Caco-2 (cell line): ENCODE measurements at regions of chr20 and their contacts with region 1.

Region 1: DNA sequence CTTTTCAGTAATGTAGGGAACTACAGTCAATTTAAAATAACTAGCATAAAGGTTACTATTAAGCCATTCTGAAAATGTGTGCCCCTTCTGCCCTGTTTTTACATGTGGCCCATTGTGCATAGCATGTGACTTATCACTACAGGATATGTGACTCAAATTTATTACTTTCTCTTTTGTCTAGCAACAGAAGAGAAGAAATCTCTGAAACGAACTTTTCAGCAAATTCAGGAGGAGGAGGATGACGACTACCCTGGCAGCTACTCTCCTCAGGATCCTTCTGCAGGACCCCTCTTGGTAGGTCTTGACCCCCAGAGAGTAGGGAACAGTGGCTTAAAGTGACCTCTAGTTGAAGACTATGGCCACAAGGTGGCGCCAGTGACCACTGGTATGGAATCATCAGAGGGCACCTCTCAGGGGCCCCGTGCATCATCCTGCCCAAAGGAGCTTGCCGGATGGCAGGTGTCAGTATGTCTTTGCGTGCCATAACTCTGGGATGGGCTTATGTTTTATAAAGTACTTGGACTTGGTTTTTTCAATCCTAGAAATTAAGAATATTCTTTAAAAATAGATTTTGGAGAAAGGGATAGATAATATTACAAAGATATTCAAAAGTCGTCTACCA is 23.9 kb downstream of the RPRD1B start:
- DNase-seq: peak; percentile 90 to 94
- H3K4me3 ChIP-seq: no peak overlapping the region
- H3K4me3 Mint-ChIP-seq: no peak overlapping the region
- H3K27ac Mint-ChIP-seq: no peak overlapping the region
- H3K4me1 ChIP-seq: peaks cover 21% of the 10 kb centered on the region
- H3K4me1 Mint-ChIP-seq: peaks cover 13% of the 10 kb centered on the region
- H3K27me3 ChIP-seq: no peaks in the 10 kb centered on the region
- H3K27me3 Mint-ChIP-seq: no peaks in the 10 kb centered on the region
- CTCF ChIP-seq: peak; percentile 98 to 100

Region 2: GRCh38 chr20:36886859-36887751 is 1170.4 kb before region 1 on chr20:
- CTCF ChIA-PET with region 1: no interaction called
- POLR2A ChIA-PET with region 1: interaction called, 13 read pairs
- intact Hi-C with region 1: no loop called
- DNase-seq: peak; percentile 94 to 97
- H3K4me3 ChIP-seq: no peak overlapping the region
- H3K4me3 Mint-ChIP-seq: peak overlapping the region; percentile 27
- H3K27ac Mint-ChIP-seq: no peak overlapping the region
- H3K4me1 ChIP-seq: peaks cover 9% of the 10 kb centered on the region; the same call in 1 of the 2 replicates
- H3K4me1 Mint-ChIP-seq: peaks cover 6% of the 10 kb centered on the region
- H3K27me3 ChIP-seq: no peaks in the 10 kb centered on the region
- H3K27me3 Mint-ChIP-seq: no peaks in the 10 kb centered on the region
- CTCF ChIP-seq: peak; percentile 100

Region 3: DNA sequence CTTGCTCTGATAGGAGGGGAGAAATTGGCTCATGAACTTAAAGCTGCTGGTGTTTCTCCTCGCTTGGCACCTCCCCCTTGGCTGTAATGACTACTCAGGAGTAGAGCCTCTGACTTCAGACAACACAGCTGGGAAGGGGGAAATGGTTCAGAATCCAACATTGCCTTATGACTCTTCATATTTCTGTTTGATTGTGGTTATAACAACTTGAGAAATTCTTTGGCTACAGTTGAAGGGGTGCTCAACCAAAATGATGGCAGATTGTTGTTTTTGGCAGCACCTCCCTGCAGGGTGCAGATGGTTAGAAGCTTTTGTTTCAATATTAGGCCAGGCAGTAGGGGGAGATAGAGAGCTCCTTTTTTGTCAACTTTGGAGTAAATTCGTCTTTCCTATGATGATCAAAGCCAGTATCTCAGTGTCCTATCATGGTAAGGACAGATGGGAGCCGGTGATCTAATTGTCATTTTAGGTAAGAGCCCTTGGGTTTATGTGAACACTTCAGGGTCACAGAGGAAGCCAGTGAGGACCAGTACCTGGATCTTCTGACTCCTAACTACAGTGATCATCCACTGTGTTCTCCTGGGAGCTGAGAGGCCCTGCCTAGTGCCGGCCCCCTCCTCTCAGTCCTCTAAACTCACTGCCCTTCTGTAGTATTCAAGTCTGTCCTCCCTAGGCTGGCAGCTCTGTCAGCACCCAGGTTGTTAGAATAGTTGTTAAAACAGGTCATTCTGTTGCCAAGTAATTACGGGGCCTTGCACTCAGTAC is 16.0 kb after region 1 on chr20:
- CTCF ChIA-PET with region 1: interaction called, 27 read pairs
- POLR2A ChIA-PET with region 1: no interaction called
- intact Hi-C with region 1: loop called (anchors 2 kb)
- DNase-seq: peak in 1 of 2 experiments; percentile 85
- H3K4me3 ChIP-seq: no peak overlapping the region
- H3K4me3 Mint-ChIP-seq: no peak overlapping the region
- H3K27ac Mint-ChIP-seq: no peak overlapping the region
- H3K4me1 ChIP-seq: peaks cover 4% of the 10 kb centered on the region; the same call in 1 of the 2 replicates
- H3K4me1 Mint-ChIP-seq: peaks cover 13% of the 10 kb centered on the region
- H3K27me3 ChIP-seq: no peaks in the 10 kb centered on the region
- H3K27me3 Mint-ChIP-seq: no peaks in the 10 kb centered on the region
- CTCF ChIP-seq: peak; percentile 95 to 98

Region 4: DNA sequence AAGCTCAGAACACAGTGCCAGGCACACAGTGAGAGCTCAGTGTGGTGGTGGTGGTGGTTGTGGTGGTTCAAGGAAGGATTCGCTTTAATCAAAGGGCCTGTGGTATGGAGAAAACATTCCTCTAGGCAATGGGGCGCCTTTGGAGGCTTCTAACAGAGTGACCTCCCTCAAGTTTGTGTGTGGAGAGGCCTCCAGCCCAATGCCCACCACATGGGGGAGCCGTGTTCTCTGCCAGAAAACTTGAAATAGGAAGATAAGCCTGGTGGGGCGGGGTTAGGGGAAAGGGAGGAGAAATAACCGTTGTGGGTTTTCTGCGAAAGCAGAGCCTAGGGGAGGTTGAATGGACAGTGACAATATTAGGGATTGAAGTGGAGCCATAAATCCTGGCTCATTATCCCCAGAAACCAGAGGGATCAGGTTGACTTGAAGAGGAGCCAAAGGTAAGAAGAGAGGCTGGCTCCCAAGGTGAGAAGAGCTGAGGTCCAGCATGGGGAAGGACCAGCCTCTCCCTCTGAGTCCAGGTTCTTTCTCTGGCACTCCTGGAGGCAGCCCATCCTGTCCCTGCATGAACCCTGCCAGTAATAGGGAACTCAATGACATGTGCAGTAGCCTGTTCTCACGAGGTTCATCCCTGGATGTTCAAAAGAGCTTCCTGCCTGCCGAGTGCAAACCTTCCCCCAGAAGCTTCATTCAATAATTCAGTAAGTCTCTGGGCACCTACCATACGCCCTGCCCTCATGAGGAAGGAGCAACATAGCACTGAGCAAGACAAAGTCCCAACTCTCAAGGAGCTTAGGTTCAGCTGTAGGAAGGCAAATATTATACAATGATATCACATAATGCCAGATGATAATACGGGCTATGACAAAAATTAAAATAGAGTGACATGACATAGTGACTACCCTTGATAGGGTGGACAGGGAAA is 56.2 kb after region 1 on chr20:
- CTCF ChIA-PET with region 1: interaction called, 18 read pairs
- POLR2A ChIA-PET with region 1: no interaction called
- intact Hi-C with region 1: loop called (anchors 1 kb)
- DNase-seq: peak; percentile 93
- H3K4me3 ChIP-seq: no peak overlapping the region
- H3K4me3 Mint-ChIP-seq: peak overlapping the region; percentile 8
- H3K27ac Mint-ChIP-seq: peak overlapping the region; percentile 34
- H3K4me1 ChIP-seq: peaks cover 76% of the 10 kb centered on the region
- H3K4me1 Mint-ChIP-seq: peaks cover 77% of the 10 kb centered on the region
- H3K27me3 ChIP-seq: no peaks in the 10 kb centered on the region
- H3K27me3 Mint-ChIP-seq: no peaks in the 10 kb centered on the region
- CTCF ChIP-seq: peak; percentile 80 to 93

Region 5: DNA sequence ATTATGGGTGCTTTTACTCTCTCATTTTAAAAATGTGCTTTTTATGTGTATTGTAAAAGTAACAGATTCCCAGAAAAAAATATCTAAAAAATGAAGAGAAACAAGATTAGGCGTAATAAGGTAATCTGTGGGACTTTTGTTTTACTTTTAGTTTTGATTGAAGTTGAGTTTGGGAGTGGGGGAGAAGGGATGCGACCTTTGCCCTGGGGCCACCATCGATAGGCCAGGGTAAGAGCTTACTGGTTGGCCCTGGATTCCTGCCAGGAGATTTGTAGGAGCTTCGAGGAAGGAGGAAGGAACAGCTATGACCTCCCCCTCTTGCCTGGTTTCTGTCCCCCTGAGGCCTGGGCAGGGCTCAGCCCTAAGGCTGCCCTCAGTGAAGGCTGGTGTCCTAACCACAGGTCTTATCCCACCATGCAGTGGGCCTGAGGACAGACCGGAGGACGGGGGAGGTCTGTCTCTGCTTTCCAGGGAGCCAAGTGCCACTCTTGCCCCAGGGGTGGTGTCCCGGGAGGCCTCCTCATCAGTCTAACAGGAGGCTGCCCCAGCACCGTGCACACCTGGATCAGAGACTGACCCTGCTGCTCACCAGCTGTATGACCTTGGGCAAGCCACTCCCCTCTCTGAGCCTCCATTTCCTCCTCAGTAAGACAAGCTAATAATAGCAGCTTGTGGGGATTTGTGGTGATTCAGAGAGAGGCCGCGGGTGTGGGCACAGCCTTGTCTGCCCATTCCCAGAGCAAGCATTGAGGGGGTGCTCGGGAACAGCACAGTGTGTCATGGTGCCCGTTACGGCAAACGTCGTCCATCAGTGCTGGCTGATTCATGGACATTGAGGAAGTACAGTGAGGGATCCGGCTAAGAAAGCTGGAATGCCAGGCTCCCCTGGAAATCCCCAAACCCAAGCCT is 86.4 kb after region 1 on chr20:
- CTCF ChIA-PET with region 1: interaction called, 23 read pairs
- POLR2A ChIA-PET with region 1: no interaction called
- intact Hi-C with region 1: no loop called
- DNase-seq: peak; percentile 89 to 97
- H3K4me3 ChIP-seq: no peak overlapping the region
- H3K4me3 Mint-ChIP-seq: peak overlapping the region; percentile 56
- H3K27ac Mint-ChIP-seq: peak overlapping the region; percentile 96
- H3K4me1 ChIP-seq: peaks cover 66% of the 10 kb centered on the region
- H3K4me1 Mint-ChIP-seq: peaks cover 48% of the 10 kb centered on the region
- H3K27me3 ChIP-seq: no peaks in the 10 kb centered on the region
- H3K27me3 Mint-ChIP-seq: no peaks in the 10 kb centered on the region
- CTCF ChIP-seq: no peak

Region 6: GRCh38 chr20:38210741-38211140 is 153.3 kb after region 1 on chr20:
- CTCF ChIA-PET with region 1: interaction called, 11 read pairs
- POLR2A ChIA-PET with region 1: no interaction called
- intact Hi-C with region 1: no loop called
- DNase-seq: peak in 1 of 2 experiments; percentile 47
- H3K4me3 ChIP-seq: no peak overlapping the region
- H3K4me3 Mint-ChIP-seq: no peak overlapping the region
- H3K27ac Mint-ChIP-seq: no peak overlapping the region
- H3K4me1 ChIP-seq: no peaks in the 10 kb centered on the region
- H3K4me1 Mint-ChIP-seq: no peaks in the 10 kb centered on the region
- H3K27me3 ChIP-seq: no peaks in the 10 kb centered on the region
- H3K27me3 Mint-ChIP-seq: peaks cover 4% of the 10 kb centered on the region
- CTCF ChIP-seq: no peak

Region 7: GRCh38 chr20:38290832-38291581 is 233.5 kb after region 1 on chr20:
- CTCF ChIA-PET with region 1: no interaction called
- POLR2A ChIA-PET with region 1: no interaction called
- intact Hi-C with region 1: loop called (anchors 10 kb)
- DNase-seq: peak; percentile 62 to 76
- H3K4me3 ChIP-seq: no peak overlapping the region
- H3K4me3 Mint-ChIP-seq: peak overlapping the region; percentile 6
- H3K27ac Mint-ChIP-seq: no peak overlapping the region
- H3K4me1 ChIP-seq: no peaks in the 10 kb centered on the region
- H3K4me1 Mint-ChIP-seq: no peaks in the 10 kb centered on the region
- H3K27me3 ChIP-seq: no peaks in the 10 kb centered on the region
- H3K27me3 Mint-ChIP-seq: peaks cover 16% of the 10 kb centered on the region
- CTCF ChIP-seq: peak; percentile 65